ENCODE measurements at regions of chr6 and their contacts with region 1.

Region 1: GRCh38 chr6:137560184-137560563 is 66.0 kb upstream of the OLIG3 start:
- DNase-seq: no peak
- H3K4me3 ChIP-seq: no peak overlapping the region
- H3K4me3 Mint-ChIP-seq: peak overlapping the region; percentile 32 to 88 (median 64)
- H3K27ac ChIP-seq: no peak overlapping the region
- H3K27ac Mint-ChIP-seq: peak overlapping the region; percentile 46 to 97 (median 92)
- H3K4me1 ChIP-seq: peaks cover 30% of the 10 kb centered on the region
- H3K4me1 Mint-ChIP-seq: peaks cover 38 to 47% (median 44%) of the 10 kb centered on the region in 3 donors
- H3K27me3 ChIP-seq: no peaks in the 10 kb centered on the region
- H3K27me3 Mint-ChIP-seq: peaks cover 4 to 6% of the 10 kb centered on the region in 2 donors

Region 2: GRCh38 chr6:137452333-137452894 is 107.8 kb before region 1 on chr6:
- CTCF ChIA-PET with region 1: no interaction called
- POLR2A ChIA-PET with region 1: no interaction called
- DNase-seq: no peak
- H3K4me3 ChIP-seq: no peak overlapping the region
- H3K4me3 Mint-ChIP-seq: no peak overlapping the region
- H3K27ac ChIP-seq: no peak overlapping the region
- H3K27ac Mint-ChIP-seq: no peak overlapping the region
- H3K4me1 ChIP-seq: no peaks in the 10 kb centered on the region
- H3K4me1 Mint-ChIP-seq: no peaks in the 10 kb centered on the region
- H3K27me3 ChIP-seq: no peaks in the 10 kb centered on the region
- H3K27me3 Mint-ChIP-seq: peaks cover 9 to 41% of the 10 kb centered on the region in 2 donors

Region 3: GRCh38 chr6:137570393-137570792 is 10.2 kb after region 1 on chr6:
- CTCF ChIA-PET with region 1: interaction called, 14 read pairs
- POLR2A ChIA-PET with region 1: no interaction called
- DNase-seq: no peak
- H3K4me3 ChIP-seq: no peak overlapping the region
- H3K4me3 Mint-ChIP-seq: no peak overlapping the region
- H3K27ac ChIP-seq: no peak overlapping the region
- H3K27ac Mint-ChIP-seq: no peak overlapping the region
- H3K4me1 ChIP-seq: no peaks in the 10 kb centered on the region
- H3K4me1 Mint-ChIP-seq: peaks cover 0 to 3% (median 0%) of the 10 kb centered on the region in 3 donors
- H3K27me3 ChIP-seq: no peaks in the 10 kb centered on the region
- H3K27me3 Mint-ChIP-seq: peaks cover 9 to 42% of the 10 kb centered on the region in 2 donors